ENCODE measurements at regions of chr9 and their contacts with region 1.

Region 1: GRCh38 chr9:124617471-124618141 is 110.4 kb upstream of the NR5A1 start:
- DNase-seq: peak; percentile 27 to 76 (median 50)
- H3K4me3 ChIP-seq: no peak overlapping the region
- H3K4me3 Mint-ChIP-seq: no peak overlapping the region
- H3K27ac ChIP-seq: no peak overlapping the region
- H3K27ac Mint-ChIP-seq: no peak overlapping the region
- H3K4me1 ChIP-seq: no peaks in the 10 kb centered on the region
- H3K4me1 Mint-ChIP-seq: peaks cover 0 to 3% (median 0%) of the 10 kb centered on the region in 3 donors
- H3K27me3 ChIP-seq: no peaks in the 10 kb centered on the region
- H3K27me3 Mint-ChIP-seq: peaks cover 6 to 12% of the 10 kb centered on the region in 2 donors

Region 2: DNA sequence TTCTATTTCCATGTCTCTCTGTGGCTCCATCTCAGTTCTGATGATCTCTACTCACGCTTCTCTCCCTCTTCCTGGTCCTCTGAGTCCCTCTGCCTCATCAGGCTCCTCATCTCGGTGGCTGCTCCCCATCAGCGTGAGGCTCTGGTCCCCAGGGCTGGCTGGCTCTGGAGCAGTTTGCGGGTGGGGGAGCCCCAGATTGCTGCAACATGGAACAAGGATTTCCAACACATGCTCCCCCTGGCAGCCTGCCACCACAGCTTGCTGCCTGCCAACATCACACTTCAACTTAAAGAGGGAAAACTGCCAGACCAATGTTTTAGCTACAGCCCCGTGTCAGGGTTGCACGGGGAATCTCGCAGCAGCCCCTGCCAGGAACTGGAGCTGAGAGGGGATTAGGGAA is 437.0 kb before region 1 on chr9:
- CTCF ChIA-PET with region 1: no interaction called
- POLR2A ChIA-PET with region 1: no interaction called
- DNase-seq: no peak
- H3K4me3 ChIP-seq: no peak overlapping the region
- H3K4me3 Mint-ChIP-seq: no peak overlapping the region
- H3K27ac ChIP-seq: no peak overlapping the region
- H3K27ac Mint-ChIP-seq: no peak overlapping the region
- H3K4me1 ChIP-seq: no peaks in the 10 kb centered on the region
- H3K4me1 Mint-ChIP-seq: no peaks in the 10 kb centered on the region
- H3K27me3 ChIP-seq: no peaks in the 10 kb centered on the region
- H3K27me3 Mint-ChIP-seq: peaks cover 8 to 11% of the 10 kb centered on the region in 2 donors

Region 3: DNA sequence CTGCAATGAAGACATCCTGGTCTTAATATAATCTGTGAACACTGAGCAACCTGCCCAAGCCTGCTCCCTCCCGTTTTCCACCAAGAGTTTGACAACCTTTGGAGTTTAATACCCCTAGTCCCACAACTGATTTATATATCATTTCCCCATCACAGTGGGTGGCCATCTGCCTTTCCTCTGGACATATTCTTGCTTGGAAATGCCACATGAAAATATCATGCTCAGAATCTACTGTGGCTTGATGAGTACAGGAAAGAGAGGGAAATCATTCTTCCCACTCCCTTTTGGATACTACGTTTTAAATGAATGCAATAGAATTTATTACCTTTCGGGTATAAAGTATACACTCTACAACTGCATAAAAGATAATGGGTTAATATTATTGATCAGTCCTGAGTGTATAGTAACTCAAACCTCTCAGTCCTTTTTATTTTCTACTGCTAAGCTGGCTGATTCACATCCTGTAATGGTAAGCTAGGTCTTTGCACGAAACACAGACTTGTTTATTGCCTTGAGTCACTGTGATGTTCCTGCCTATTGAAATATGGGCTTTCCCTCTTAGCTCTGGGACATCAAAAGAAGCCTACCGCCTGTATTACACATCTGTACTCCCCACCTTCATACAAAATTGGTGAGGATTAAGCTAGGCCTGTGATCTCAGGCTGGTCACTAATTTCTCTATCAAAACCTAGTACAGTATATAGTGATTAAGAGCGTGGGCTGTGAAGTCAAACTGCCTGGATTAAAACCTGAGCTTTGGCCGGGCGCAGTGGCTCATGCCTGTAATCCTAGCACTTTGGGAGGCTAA is 42.9 kb before region 1 on chr9:
- CTCF ChIA-PET with region 1: no interaction called
- POLR2A ChIA-PET with region 1: no interaction called
- DNase-seq: no peak
- H3K4me3 ChIP-seq: no peak overlapping the region
- H3K4me3 Mint-ChIP-seq: no peak overlapping the region
- H3K27ac ChIP-seq: no peak overlapping the region
- H3K27ac Mint-ChIP-seq: no peak overlapping the region
- H3K4me1 ChIP-seq: no peaks in the 10 kb centered on the region
- H3K4me1 Mint-ChIP-seq: no peaks in the 10 kb centered on the region
- H3K27me3 ChIP-seq: no peaks in the 10 kb centered on the region
- H3K27me3 Mint-ChIP-seq: peaks cover 7 to 16% of the 10 kb centered on the region in 2 donors

Region 4: GRCh38 chr9:124710766-124711165 is 93.2 kb after region 1 on chr9:
- CTCF ChIA-PET with region 1: interaction called, 15 read pairs
- POLR2A ChIA-PET with region 1: no interaction called
- DNase-seq: no peak
- H3K4me3 ChIP-seq: no peak overlapping the region
- H3K4me3 Mint-ChIP-seq: no peak overlapping the region
- H3K27ac ChIP-seq: no peak overlapping the region
- H3K27ac Mint-ChIP-seq: no peak overlapping the region
- H3K4me1 ChIP-seq: no peaks in the 10 kb centered on the region
- H3K4me1 Mint-ChIP-seq: no peaks in the 10 kb centered on the region
- H3K27me3 ChIP-seq: peaks cover 5% of the 10 kb centered on the region
- H3K27me3 Mint-ChIP-seq: peaks cover 21 to 34% of the 10 kb centered on the region in 2 donors